ENCODE measurements at regions of chr5 and their contacts with region 1.

Region 1: DNA sequence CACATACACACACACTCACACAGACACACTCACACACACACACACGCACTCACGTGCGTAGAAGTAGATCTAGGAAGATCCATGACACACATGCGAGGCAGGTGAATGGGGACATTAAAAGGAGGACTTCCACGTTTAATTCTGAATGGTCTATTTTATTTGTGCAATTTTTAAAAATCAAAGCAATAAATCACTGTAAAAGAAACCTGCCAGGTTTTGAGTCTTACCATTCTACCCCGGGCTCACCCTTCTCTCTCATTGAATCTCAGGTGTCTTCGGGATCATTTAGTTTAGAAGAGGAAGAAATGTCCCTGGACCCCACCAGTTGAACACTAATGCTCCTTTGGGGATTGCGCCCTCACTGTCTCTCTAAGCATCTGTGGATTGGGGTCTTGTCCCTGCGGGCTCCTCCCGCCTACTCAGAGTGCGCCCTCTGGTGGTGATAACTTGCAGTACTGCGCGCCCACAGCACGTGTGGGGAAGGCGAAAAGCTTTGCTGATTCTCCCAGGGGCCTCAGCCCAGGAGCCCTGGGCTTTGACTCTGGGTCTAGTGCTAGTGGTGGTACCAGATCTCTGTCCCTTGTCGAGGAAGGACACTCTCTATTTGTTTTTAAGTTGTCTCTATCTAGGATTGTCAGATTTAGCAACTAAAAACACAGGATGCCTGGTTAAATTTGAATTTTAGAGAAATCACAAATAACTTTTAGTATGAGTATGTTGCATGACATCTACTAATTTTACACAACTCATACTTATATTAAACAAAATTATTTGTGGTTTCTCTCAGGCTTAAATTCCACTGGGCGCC is 34.8 kb downstream of the BOD1 start:
- DNase-seq: peak; percentile 93
- ATAC-seq: peak; percentile 95
- H3K4me3 Mint-ChIP-seq: no peak overlapping the region
- H3K27ac Mint-ChIP-seq: no peak overlapping the region
- H3K4me1 Mint-ChIP-seq: no peaks in the 10 kb centered on the region
- H3K27me3 Mint-ChIP-seq: peaks cover 16% of the 10 kb centered on the region
- CTCF ChIP-seq: peak; percentile 92

Region 2: GRCh38 chr5:173396311-173396993 is 185.2 kb before region 1 on chr5:
- CTCF ChIA-PET with region 1: interaction called, 17 read pairs
- POLR2A ChIA-PET with region 1: no interaction called
- DNase-seq: peak; percentile 73
- ATAC-seq: peak; percentile 96
- H3K4me3 Mint-ChIP-seq: no peak overlapping the region
- H3K27ac Mint-ChIP-seq: no peak overlapping the region
- H3K4me1 Mint-ChIP-seq: 0 out of 2 replicates have a peak, but pooled peaks cover 3% of the 10 kb centered on the region
- H3K27me3 Mint-ChIP-seq: peaks cover 5% of the 10 kb centered on the region
- CTCF ChIP-seq: no peak; the same call in 1 of the 2 replicates

Region 3: GRCh38 chr5:173554038-173554954 is 27.3 kb before region 1 on chr5:
- CTCF ChIA-PET with region 1: interaction called, 11 read pairs
- POLR2A ChIA-PET with region 1: no interaction called
- DNase-seq: no peak
- ATAC-seq: no peak
- H3K4me3 Mint-ChIP-seq: no peak overlapping the region
- H3K27ac Mint-ChIP-seq: no peak overlapping the region
- H3K4me1 Mint-ChIP-seq: peaks cover 19% of the 10 kb centered on the region
- H3K27me3 Mint-ChIP-seq: peaks cover 3% of the 10 kb centered on the region
- CTCF ChIP-seq: no peak

Region 4: DNA sequence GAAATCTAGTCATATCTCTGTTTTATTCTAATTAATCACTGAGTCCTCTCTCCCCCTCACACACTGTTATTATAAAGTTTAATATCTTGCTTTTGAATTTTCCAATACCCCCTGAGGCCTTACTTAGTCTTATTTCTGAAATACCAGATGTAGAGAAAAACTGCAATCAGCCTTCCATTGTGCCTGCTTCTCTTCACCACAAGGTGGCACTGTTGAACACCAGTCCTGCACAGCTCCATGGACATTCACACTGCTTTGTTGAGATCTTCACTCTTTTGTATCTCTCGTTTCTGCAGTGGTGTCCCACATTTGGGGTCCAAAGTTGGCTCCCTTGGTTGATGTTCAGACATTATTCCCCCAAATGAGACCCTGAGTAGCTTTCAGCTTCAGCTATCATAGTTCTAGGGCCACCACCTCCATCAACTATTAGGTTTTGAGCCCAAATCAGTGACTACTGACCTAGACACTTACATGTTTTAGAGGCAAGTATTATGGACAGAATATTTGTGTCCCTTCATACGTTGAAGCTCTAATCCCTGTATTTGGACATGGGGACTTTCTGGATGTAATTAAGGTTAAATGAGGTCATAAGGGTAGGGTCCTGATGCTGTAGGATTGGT is 10.5 kb after region 1 on chr5:
- CTCF ChIA-PET with region 1: interaction called, 12 read pairs
- POLR2A ChIA-PET with region 1: no interaction called
- DNase-seq: no peak
- ATAC-seq: no peak
- H3K4me3 Mint-ChIP-seq: no peak overlapping the region
- H3K27ac Mint-ChIP-seq: no peak overlapping the region
- H3K4me1 Mint-ChIP-seq: no peaks in the 10 kb centered on the region
- H3K27me3 Mint-ChIP-seq: peaks cover 13% of the 10 kb centered on the region
- CTCF ChIP-seq: peak; percentile 89

Region 5: DNA sequence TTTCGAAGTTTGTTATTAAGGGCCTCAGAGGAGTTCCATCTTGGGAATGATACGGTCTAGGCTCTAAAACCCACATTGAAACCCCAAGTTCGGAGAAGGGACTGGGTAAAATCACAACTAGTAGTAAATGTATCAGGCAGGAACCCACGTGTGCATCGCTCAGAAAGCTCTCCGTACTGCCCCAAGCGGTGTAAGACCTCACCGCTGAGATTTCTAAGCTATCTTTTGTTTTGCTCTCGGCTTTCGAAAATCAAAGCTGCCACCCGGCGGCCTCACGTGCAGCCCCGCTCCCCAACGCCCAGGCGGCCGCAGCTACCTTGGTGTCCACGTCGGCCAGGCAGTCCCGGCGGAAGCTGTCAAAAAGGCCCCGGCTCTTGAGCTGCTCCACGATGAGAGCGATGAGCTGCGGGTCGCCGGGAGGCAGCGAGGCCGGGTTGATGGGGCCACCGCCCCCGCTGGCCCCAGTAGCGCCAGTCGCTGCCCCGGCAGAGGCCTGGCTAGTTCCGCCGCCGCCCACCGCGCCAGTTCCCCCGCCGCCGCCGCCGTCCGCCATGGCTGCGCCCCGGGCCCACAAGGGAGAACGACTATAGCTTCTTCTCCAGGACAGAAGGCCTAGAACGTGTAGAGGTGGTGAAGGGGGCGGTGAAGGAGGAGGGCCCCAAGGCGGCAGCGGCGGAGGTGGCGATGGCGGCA is 34.4 kb after region 1 on chr5:
- CTCF ChIA-PET with region 1: interaction called, 15 read pairs
- POLR2A ChIA-PET with region 1: no interaction called
- DNase-seq: peak; percentile 64
- ATAC-seq: peak; percentile 29
- H3K4me3 Mint-ChIP-seq: peak overlapping the region; percentile 92
- H3K27ac Mint-ChIP-seq: peak overlapping the region; percentile 86
- H3K4me1 Mint-ChIP-seq: peaks cover 45% of the 10 kb centered on the region
- H3K27me3 Mint-ChIP-seq: no peaks in the 10 kb centered on the region
- CTCF ChIP-seq: no peak

Measured in WTC11 (cell line).